A673 (cell line): ENCODE measurements at regions of chr6 and their contacts with region 1.

Region 1: DNA sequence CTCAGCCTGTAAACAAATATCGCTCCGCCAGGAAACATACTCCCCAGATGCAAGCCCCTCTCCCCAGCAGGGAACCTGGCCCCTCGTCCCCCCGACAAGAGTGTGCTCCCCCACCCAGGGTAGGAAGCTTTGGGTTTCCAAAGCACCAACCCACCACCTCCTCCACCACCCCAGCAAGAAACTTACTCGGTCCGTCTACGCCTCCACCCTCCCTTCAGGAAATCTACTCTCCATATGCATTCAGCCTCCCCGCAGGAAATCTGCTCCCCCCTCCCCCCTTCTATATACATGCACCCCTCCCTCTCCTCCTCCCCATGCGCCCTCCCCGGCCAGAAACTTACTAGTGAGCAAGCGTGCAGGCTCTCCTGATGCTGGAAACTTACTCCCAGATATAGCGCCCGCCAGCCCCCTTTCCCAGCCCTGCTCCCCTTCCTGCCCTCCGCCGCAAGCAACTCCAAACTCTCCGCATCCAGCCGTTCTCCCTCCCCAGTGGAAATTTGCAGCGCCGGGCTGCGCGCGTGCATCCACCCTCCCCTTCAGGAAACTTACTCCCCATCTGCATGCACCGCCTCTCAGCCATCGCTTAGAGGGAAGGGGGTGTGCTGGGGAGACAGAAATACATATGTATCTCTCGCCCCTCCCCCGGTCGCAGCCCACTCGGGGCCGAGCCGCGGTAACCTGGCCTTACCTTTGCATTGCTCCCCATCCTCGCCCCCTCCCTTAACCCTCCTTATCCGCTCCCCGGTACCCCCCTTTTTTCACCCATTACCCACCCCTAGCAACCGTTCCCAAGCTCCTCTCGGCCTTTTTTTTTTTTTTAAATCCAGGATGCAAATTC is at the start of gene TRERF1:
- DNase-seq: peak; percentile 92
- H3K4me3 ChIP-seq: peak within 1 kb of the TSS; percentile 65
- H3K27ac ChIP-seq: peak within 1 kb of the TSS; percentile 86
- H3K4me1 ChIP-seq: peaks cover 12% of the 10 kb centered on the region
- H3K27me3 ChIP-seq: no peaks in the 10 kb centered on the region
- CTCF ChIP-seq: no peak
- total RNA-seq, gene TRERF1: 9.5 and 10.8 TPM in 2 replicates

Region 2: DNA sequence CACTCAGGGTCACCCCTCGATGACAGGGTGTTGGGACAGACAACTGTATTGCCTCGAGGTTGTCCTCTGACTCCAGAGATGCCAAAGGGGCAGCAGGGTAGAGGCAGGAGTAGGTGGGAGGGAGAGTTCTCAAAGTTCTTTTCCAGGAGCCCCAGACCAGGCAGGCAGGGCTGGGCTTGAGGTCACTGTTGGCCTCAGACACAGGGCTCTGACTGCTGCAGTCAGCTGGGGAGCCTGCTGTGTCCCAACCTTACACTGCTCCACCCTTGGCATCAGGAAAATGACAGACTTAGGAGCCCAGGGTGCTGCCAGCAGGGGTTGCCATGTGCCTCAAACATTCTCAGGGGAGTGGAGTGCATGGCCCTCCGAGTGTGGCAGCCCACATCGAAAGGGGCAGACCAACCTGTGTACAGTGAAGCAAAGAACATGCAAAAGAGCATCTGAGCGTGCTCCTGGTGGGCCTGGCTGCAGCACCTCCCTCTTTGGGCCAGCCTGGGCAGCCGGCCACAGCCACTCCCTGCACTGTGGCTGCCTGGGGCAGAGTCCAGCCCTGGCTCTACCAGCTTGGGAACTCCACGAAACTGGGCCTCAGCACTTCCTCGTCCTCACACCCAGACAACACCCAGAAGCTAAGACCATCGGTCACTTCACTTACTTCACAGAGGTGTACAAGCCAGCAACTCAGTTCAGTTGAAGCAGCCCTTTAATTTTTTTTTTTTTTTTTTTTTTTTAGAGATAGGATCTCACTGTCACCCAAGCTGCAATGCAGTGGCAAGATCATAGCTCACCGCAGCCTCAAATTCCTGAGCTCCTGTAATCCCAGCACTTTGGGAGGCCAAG is 333.2 kb before region 1 on chr6:
- CTCF ChIA-PET with region 1: no interaction called
- POLR2A ChIA-PET with region 1: interaction called, 13 read pairs
- intact Hi-C with region 1: no loop called
- DNase-seq: no peak
- H3K4me3 ChIP-seq: no peak overlapping the region
- H3K27ac ChIP-seq: no peak overlapping the region
- H3K4me1 ChIP-seq: no peaks in the 10 kb centered on the region
- H3K27me3 ChIP-seq: no peaks in the 10 kb centered on the region
- CTCF ChIP-seq: no peak

Region 3: GRCh38 chr6:42260972-42261371 is 190.6 kb before region 1 on chr6:
- CTCF ChIA-PET with region 1: no interaction called
- POLR2A ChIA-PET with region 1: no interaction called
- intact Hi-C with region 1: loop called (anchors 2 kb)
- DNase-seq: peak; percentile 66
- H3K4me3 ChIP-seq: peak overlapping the region; percentile 39
- H3K27ac ChIP-seq: no peak overlapping the region
- H3K4me1 ChIP-seq: peaks cover 18% of the 10 kb centered on the region
- H3K27me3 ChIP-seq: no peaks in the 10 kb centered on the region
- CTCF ChIP-seq: peak; percentile 73